Activated CD8-positive, alpha-beta T cell treated with anti-CD3 and anti-CD28 coated beads, Interleukin-2, amount 10 ng/mL, durations not matched to agents 7 days and 5 days (primary cell): ENCODE measurements at regions of chr5 and their contacts with region 1.

Region 1: GRCh38 chr5:55037046-55037771 is 13.2 kb downstream of the GZMK start:
- DNase-seq: peak; percentile 84
- ATAC-seq: peak; percentile 96
- H3K4me3 Mint-ChIP-seq: no peak overlapping the region
- H3K27ac Mint-ChIP-seq: peak overlapping the region; percentile 89
- H3K4me1 Mint-ChIP-seq: peaks cover 50% of the 10 kb centered on the region
- H3K27me3 Mint-ChIP-seq: no peaks in the 10 kb centered on the region

Region 2: GRCh38 chr5:54637654-54638053 is 399.6 kb before region 1 on chr5:
- CTCF ChIA-PET with region 1: no interaction called
- POLR2A ChIA-PET with region 1: no interaction called
- DNase-seq: no peak
- ATAC-seq: no peak
- H3K4me3 Mint-ChIP-seq: no peak overlapping the region
- H3K27ac Mint-ChIP-seq: no peak overlapping the region
- H3K4me1 Mint-ChIP-seq: peaks cover 19% of the 10 kb centered on the region
- H3K27me3 Mint-ChIP-seq: no peaks in the 10 kb centered on the region

Region 3: DNA sequence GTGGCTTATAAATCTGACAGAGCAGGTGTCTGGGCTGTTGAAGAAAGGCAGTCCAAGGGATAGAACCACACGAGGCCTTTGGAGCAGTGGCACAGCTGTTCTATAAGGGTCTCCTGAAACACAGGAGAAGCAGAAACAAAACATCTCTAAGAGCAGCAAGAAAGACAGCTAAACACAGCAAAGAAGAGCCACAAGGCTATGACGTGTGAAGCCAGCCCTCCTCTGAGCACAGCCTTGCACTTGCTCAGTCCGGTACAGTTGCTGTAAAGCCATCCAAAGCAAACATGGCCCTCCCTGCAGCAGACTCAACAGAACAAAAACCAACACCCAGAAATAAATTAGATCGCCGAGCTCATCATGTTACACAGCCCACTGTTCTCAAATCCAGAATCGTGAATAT is 15.8 kb before region 1 on chr5:
- CTCF ChIA-PET with region 1: interaction called, 52 read pairs
- POLR2A ChIA-PET with region 1: interaction called, 14 read pairs
- DNase-seq: no peak
- ATAC-seq: no peak
- H3K4me3 Mint-ChIP-seq: no peak overlapping the region
- H3K27ac Mint-ChIP-seq: no peak overlapping the region
- H3K4me1 Mint-ChIP-seq: peaks cover 56% of the 10 kb centered on the region
- H3K27me3 Mint-ChIP-seq: no peaks in the 10 kb centered on the region

Region 4: DNA sequence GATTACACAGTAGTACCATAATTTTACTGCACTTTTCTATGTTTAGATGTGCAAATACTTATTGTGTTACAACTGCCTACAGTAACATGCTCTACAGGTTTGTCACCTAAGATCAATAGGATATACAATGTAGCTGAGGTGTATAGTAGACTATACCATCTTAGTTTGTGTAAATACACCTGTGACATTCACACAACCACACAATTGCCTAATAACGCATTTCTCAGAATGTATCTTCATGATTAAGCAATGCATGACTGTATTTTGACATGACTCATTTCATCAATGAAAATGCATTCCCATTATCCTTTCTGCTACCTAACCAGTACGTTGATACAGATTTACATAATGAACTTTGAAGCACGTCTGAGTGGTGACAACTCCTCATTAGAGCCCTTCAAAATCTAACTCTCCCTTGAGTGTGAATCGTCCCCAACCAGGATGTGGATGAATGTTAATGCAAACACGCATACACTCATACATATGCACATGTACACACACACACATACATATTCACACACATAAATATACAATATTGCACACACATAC is 15.2 kb after region 1 on chr5:
- CTCF ChIA-PET with region 1: interaction called, 16 read pairs
- POLR2A ChIA-PET with region 1: interaction called, 7 read pairs
- DNase-seq: no peak
- ATAC-seq: no peak
- H3K4me3 Mint-ChIP-seq: no peak overlapping the region
- H3K27ac Mint-ChIP-seq: no peak overlapping the region
- H3K4me1 Mint-ChIP-seq: peaks cover 15% of the 10 kb centered on the region
- H3K27me3 Mint-ChIP-seq: no peaks in the 10 kb centered on the region

Region 5: DNA sequence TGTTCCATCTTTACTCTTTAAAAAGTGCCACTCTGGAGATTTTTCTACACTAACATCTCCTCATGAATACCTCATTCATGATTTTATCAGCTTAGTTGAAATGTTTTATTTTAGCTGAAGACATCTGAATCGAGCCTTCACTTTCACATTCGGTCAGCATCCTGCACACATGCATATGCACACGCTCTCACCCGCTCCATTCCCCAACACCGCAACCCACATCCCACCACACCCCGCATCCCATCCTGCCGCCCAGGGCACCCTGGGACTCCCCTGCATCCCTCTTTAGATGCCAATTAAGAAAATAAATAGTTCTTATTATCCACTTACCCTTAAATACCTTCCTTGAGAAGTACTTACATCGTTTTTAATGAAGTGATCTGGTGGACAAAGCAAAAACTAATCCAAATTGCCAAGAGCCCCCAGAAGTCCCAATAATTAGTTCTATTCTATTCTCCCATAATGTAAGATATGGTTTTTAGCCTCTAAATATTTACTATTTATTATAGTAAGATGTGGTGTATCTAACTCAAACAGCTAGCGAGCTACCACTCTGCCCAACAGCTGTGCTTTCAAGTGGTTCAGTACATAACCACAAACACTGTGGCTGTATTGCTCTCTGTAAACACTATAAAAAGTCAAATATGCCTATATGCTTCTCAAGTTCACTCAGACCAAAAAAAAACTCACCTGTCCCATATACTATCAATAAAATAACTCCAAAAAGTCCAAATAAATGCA is 25.0 kb after region 1 on chr5:
- CTCF ChIA-PET with region 1: interaction called, 24 read pairs
- POLR2A ChIA-PET with region 1: interaction called, 20 read pairs
- DNase-seq: peak; percentile 89
- ATAC-seq: peak; percentile 84
- H3K4me3 Mint-ChIP-seq: peak overlapping the region; percentile 64
- H3K27ac Mint-ChIP-seq: peak overlapping the region; percentile 95
- H3K4me1 Mint-ChIP-seq: peaks cover 78% of the 10 kb centered on the region
- H3K27me3 Mint-ChIP-seq: peaks cover 2% of the 10 kb centered on the region

Region 6: DNA sequence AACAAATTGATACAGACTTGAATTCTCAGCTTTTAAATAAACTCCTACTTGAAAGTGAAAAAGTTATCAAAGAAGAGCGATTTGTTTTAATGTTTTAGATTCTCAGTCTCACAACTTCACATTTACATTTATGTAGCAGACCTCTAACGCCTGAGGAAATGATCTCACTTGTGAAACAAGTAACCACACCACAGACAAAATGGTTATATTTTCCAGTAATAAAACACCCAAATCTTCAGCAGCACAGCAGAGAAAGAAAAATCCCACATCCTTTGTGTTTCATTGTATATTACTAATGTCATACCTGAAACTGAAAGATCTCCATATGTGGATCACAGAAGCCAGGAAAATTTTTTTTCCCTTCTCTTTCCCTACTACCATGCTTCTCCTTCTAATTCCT is 35.5 kb after region 1 on chr5:
- CTCF ChIA-PET with region 1: interaction called, 18 read pairs
- POLR2A ChIA-PET with region 1: interaction called, 9 read pairs
- DNase-seq: peak; percentile 36
- ATAC-seq: peak; percentile 90
- H3K4me3 Mint-ChIP-seq: peak overlapping the region; percentile 60
- H3K27ac Mint-ChIP-seq: peak overlapping the region; percentile 87
- H3K4me1 Mint-ChIP-seq: peaks cover 60% of the 10 kb centered on the region
- H3K27me3 Mint-ChIP-seq: no peaks in the 10 kb centered on the region

Region 7: GRCh38 chr5:55102348-55102747 is 65.1 kb after region 1 on chr5 and contains the start of gene GZMA:
- CTCF ChIA-PET with region 1: interaction called, 32 read pairs
- POLR2A ChIA-PET with region 1: interaction called, 12 read pairs
- DNase-seq: peak; percentile 68
- ATAC-seq: peak; percentile 78
- H3K4me3 Mint-ChIP-seq: peak within 1 kb of the TSS; percentile 84
- H3K27ac Mint-ChIP-seq: peak within 1 kb of the TSS; percentile 94
- H3K4me1 Mint-ChIP-seq: peaks cover 86% of the 10 kb centered on the region
- H3K27me3 Mint-ChIP-seq: peaks cover 2% of the 10 kb centered on the region
- total RNA-seq, gene GZMA: 356 to 365 TPM

Region 8: DNA sequence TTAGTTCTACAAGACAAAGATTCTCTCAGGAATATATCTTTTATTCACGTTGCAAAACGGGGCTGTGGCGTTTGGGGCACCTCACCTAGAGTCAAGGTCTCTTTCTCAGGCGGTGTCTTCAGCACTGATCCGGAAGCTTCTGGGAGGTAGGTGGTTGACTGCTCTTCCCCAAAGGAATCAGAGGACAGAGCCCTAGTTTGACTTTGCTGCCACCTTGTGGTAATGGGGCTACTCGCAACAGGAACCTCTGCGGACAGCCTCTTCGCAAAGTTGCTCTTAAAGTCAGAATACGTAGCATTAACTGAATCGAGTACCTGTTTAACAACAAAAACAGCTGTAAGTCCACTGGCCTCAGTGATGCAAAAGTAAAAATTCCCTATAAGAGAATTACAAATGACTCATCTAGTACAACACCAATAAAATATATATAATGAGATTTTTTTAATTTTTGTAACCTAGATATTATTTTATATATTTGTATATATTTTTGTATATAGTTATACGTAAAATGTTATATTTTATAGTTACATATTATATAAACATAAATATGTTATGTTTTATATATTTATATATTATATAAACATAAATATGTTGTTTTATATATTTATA is 109.4 kb after region 1 on chr5:
- CTCF ChIA-PET with region 1: interaction called, 15 read pairs
- POLR2A ChIA-PET with region 1: no interaction called
- DNase-seq: peak; percentile 91
- ATAC-seq: peak; percentile 82
- H3K4me3 Mint-ChIP-seq: peak overlapping the region; percentile 34
- H3K27ac Mint-ChIP-seq: peak overlapping the region; percentile 67
- H3K4me1 Mint-ChIP-seq: peaks cover 43% of the 10 kb centered on the region
- H3K27me3 Mint-ChIP-seq: peaks cover 21% of the 10 kb centered on the region